Heart right ventricle (tissue), 16 donors: ENCODE measurements at regions of chr10 and their contacts with region 1.

Region 1: DNA sequence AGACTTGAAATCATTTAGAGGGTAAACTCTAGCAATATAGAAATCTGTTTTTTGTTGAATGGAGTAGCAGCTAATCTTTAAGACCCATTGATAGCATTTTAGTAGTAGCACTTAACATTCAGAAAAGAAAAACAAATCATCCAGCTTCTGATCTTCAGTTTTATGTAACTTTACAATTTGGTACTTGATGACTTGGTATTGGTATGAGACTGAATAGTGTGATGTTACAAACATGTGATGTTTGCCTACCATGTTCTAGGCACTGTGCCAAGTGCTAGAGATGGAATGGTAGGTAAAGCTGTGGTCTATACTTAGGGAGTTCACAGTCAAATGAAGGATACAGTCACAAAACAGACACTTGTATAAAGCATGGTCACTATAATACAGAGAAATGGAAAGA is 21.3 kb downstream of the ZEB1 start:
- DNase-seq: no peak
- ATAC-seq: peak in 2 of 8 donors; percentile 30 to 51
- H3K4me3 ChIP-seq: no peak overlapping the region
- H3K27ac ChIP-seq: peak overlapping the region in 1 of 10 donors; percentile 23
- H3K4me1 ChIP-seq: peaks cover 0 to 68% (median 32%) of the 10 kb centered on the region in 9 donors
- H3K27me3 ChIP-seq: no peaks in the 10 kb centered on the region
- CTCF ChIP-seq: no peak

Region 2: GRCh38 chr10:31374146-31374696 is 33.9 kb after region 1 on chr10:
- intact Hi-C with region 1: no loop called
- DNase-seq: no peak
- ATAC-seq: peak in 2 of 8 donors; percentile 13 to 16
- H3K4me3 ChIP-seq: no peak overlapping the region
- H3K27ac ChIP-seq: no peak overlapping the region
- H3K4me1 ChIP-seq: peaks cover 0 to 55% (median 26%) of the 10 kb centered on the region in 9 donors
- H3K27me3 ChIP-seq: no peaks in the 10 kb centered on the region
- CTCF ChIP-seq: no peak

Region 3: DNA sequence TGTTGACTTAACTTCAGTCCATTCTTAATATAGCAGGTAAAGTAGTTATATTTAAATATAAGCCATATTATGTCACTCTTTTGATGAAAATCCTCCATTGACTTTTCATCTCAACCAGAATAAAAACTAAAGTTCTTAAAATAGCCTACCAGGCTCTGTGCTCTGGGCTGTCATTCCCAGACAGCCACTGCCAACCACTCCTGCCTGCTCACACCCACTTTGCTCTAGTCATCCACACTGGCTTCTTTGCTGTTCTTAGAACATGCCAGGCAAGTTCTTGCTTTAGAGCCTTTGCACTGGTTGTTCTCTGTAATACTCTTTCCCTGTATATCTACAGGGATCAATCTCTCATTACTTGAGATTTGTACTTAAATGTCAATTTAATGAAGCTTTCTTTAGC is 59.3 kb after region 1 on chr10:
- intact Hi-C with region 1: loop called in 1 of 10 experiments (anchors 10 kb)
- DNase-seq: peak; percentile 27 to 51
- ATAC-seq: peak; percentile 78 to 98 (median 92)
- H3K4me3 ChIP-seq: peak overlapping the region in 4 of 10 donors; percentile 0 to 10 (median 2)
- H3K27ac ChIP-seq: peak overlapping the region in 8 of 10 donors; percentile 32 to 77 (median 68)
- H3K4me1 ChIP-seq: peaks cover 0 to 98% (median 72%) of the 10 kb centered on the region in 9 donors
- H3K27me3 ChIP-seq: no peaks in the 10 kb centered on the region
- CTCF ChIP-seq: no peak

Region 4: GRCh38 chr10:31467796-31468535 is 127.6 kb after region 1 on chr10:
- intact Hi-C with region 1: loop called in 1 of 10 experiments (anchors 10 kb)
- DNase-seq: peak in 1 of 2 donors; percentile 9
- ATAC-seq: peak in 7 of 8 donors; percentile 25 to 71 (median 64)
- H3K4me3 ChIP-seq: no peak overlapping the region
- H3K27ac ChIP-seq: no peak overlapping the region
- H3K4me1 ChIP-seq: no peaks in the 10 kb centered on the region
- H3K27me3 ChIP-seq: no peaks in the 10 kb centered on the region
- CTCF ChIP-seq: peak; percentile 20 to 60 (median 51)